Activated T-helper 1 cell treated with anti-CD3 and anti-CD28 coated beads, Interleukin-12 subunit alpha, Interleukin-12 subunit beta, Interleukin-2, Interleukin-4 antibody, amounts not matched to agents 30 ng/mL and 10 ng/mL and 1 ng/mL, durations not matched to agents 14 hours and 24 hours and 36 hours (primary cell): ENCODE measurements at regions of chr17 and their contacts with region 1.

Region 1: DNA sequence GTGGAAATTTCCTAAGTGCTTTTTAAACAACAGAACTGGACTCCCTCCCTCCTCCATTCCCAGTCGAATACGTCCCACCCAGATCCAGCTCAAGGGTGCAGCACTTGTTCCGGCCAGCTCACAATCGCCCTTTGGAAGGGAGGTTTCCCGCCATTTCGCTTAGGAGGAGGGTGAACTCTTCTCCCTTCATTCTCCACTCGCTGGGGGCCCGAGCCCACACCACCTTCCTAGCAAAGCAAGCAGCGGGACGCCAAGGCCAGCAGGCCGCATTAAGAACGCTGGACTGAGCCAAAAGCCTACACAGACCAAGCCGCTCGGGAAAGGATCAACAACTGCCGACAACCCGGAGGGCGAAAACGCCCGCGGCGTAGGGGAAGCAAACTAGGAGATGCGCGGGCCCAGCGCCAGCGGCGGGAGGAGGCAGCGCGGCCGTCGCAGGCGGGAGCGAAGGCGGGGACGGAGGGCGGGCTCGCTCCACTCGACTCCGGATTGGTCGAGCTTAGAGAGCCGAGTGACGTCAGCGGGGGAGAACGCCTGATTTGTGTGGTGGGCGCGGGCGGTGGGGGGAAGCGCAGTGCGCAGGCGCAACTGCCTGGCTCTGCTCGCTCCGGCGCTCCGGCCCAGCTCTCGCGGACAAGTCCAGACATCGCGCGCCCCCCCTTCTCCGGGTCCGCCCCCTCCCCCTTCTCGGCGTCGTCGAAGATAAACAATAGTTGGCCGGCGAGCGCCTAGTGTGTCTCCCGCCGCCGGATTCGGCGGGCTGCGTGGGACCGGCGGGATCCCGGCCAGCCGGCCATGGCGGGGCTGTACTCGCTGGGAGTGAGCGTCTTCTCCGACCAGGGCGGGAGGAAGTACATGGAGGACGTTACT is at the start of gene PPM1D:
- DNase-seq: peak; percentile 97
- H3K4me3 Mint-ChIP-seq: peak within 1 kb of the TSS; percentile 95
- H3K27ac Mint-ChIP-seq: peak within 1 kb of the TSS; percentile 95
- H3K4me1 Mint-ChIP-seq: peaks cover 44% of the 10 kb centered on the region
- H3K27me3 Mint-ChIP-seq: no peaks in the 10 kb centered on the region
- total RNA-seq, gene PPM1D: 18.6 and 19.7 TPM in 2 replicates

Region 2: GRCh38 chr17:60493791-60494712 is 105.8 kb before region 1 on chr17:
- intact Hi-C with region 1: no loop called
- DNase-seq: no peak
- H3K4me3 Mint-ChIP-seq: no peak overlapping the region
- H3K27ac Mint-ChIP-seq: no peak overlapping the region
- H3K4me1 Mint-ChIP-seq: no peaks in the 10 kb centered on the region
- H3K27me3 Mint-ChIP-seq: no peaks in the 10 kb centered on the region

Region 3: GRCh38 chr17:60525685-60526514 is 74.0 kb before region 1 on chr17 and contains the start of gene APPBP2:
- intact Hi-C with region 1: loop called (anchors 1 kb)
- DNase-seq: peak; percentile 69
- H3K4me3 Mint-ChIP-seq: peak within 1 kb of the TSS; percentile 98
- H3K27ac Mint-ChIP-seq: peak within 1 kb of the TSS; percentile 96
- H3K4me1 Mint-ChIP-seq: peaks cover 49% of the 10 kb centered on the region
- H3K27me3 Mint-ChIP-seq: no peaks in the 10 kb centered on the region
- total RNA-seq, gene APPBP2: 23.4 and 28.1 TPM in 2 replicates

Region 4: DNA sequence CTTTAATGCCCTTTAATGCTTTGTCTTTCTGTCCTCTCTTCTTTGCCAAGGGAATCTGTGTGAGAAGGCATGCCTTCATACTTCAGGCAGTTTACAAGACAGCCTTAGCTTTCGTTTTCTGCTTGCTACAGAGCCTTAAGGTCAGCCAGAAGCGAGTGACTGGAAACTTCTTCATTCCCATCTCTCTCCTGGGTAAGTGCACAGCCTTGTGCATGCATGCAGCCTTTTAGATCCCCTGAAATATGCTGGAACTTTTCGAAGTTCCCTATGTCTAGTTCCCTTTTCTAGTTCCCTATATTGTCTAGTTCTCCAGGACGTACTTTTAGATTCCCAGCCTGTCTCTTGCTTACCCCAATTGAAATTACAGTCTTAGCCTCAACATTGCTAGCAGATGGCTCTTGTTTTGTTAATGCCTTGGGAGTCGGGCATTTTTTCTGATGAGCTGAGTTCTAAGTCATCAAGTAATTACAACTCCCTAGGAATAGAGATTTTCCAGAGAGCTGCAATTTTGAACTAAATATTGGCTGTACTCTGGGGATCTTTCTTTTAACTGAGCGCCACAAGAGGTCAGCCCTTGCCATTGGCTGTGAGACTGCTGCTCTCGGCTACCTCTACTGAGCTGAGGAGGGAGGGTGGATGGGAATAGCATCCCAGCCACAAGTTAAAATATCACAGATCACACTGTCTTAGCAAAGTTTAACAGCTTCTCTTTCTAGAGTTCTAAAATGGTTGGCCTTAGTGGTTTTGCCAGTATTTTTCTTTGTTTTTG is 22.5 kb before region 1 on chr17:
- intact Hi-C with region 1: loop called (anchors 2 kb)
- DNase-seq: no peak
- H3K4me3 Mint-ChIP-seq: peak overlapping the region; percentile 68
- H3K27ac Mint-ChIP-seq: no peak overlapping the region
- H3K4me1 Mint-ChIP-seq: peaks cover 10% of the 10 kb centered on the region
- H3K27me3 Mint-ChIP-seq: peaks cover 8% of the 10 kb centered on the region

Region 5: GRCh38 chr17:60677308-60678124 is 77.7 kb after region 1 on chr17 and contains the start of gene BCAS3:
- intact Hi-C with region 1: loop called (anchors 1 kb)
- DNase-seq: peak; percentile 97
- H3K4me3 Mint-ChIP-seq: peak within 1 kb of the TSS; percentile 89
- H3K27ac Mint-ChIP-seq: peak within 1 kb of the TSS; percentile 62
- H3K4me1 Mint-ChIP-seq: peaks cover 19% of the 10 kb centered on the region
- H3K27me3 Mint-ChIP-seq: no peaks in the 10 kb centered on the region
- total RNA-seq, gene BCAS3: 8.3 and 8.5 TPM in 2 replicates